GM18951 (cell line): ENCODE measurements at regions of chr13 and their contacts with region 1.

Region 1: GRCh38 chr13:51070005-51070649 is 40.9 kb downstream of the C13orf42 start:
- POLR2A ChIP-seq: no peak

Region 2: GRCh38 chr13:49356223-49356622 is 1713.9 kb before region 1 on chr13:
- in situ Hi-C with region 1: no loop called
- POLR2A ChIP-seq: no peak

Region 3: DNA sequence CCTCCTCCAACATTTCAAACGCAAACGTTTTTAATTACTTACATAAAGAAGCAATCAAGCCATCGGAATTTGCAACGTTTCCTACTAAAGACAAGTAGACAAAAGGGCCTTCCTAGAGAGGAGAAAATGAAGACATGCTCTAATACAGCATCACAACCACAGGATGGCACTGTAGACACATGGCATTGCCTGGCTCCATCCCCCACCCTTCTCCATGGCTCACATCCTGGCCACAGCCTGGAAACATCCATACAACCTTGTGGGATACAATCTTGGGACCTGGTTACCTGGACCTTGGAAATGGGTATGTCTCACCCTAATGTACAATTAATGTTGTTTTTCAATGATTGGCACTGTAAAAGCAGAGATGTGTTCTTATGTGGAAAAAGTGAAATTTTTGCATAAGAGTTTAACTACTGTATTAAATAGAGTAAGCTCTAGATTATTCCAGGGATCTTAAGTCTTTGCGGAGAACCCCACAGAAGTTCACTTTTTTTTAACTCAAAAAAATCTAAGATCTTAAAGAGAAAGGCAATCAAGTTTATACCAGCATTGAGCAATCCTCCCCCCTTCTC is 1400.3 kb before region 1 on chr13:
- in situ Hi-C with region 1: loop called (anchors 25 kb)
- POLR2A ChIP-seq: no peak

Region 4: DNA sequence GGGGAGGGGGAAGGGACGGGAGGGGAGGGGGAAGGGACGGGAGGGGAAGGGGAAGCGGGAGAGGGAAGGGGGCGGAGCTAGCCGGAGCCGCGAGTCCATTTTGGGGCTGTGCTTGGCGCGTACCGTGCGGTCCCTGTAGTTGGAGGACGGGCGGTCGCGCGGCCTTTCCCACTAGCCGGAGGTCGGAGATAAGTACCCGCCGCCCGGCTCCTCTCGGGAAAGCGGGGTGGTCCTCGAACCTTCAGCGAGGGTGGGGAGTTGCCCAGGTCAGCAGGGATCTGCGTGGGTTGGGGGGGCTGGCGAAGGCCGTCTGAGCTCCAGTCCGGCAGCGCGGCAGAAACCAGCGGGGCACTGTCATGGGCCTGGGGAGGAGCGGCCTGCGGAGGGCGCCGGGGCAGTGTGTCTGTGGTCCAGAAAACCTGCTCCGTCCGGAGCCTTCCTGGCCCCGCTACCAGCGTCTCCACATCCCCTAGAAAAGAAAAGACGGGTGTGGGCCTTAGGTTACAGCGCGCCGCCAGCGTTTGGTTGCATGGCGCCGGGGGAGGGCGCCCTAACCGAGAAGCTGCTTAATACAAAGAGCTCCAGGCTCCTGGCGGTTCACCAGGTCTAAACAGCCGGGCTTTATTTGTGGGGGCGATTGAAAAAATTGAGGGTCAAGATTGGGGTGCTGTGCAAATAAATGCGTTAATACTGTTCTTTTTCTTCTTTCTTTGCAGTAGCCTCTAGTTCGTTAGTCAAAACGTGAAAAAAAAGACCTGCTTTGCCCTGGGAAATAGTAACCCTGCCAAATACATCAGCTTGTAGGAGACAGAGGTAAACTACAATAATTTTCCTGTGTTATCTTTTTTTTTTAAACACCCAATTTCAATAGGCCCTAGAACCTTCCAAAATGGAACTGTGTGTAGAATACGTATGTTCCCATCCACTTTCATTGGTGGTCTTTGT is 1072.9 kb before region 1 on chr13 and contains the start of gene TRIM13:
- in situ Hi-C with region 1: loop called (anchors 25 kb)
- POLR2A ChIP-seq: peak; percentile 79

Region 5: GRCh38 chr13:50801087-50801931 is 268.8 kb before region 1 on chr13:
- in situ Hi-C with region 1: loop called (anchors 25 kb)
- POLR2A ChIP-seq: no peak